Heart left ventricle (tissue), 16 donors: ENCODE measurements at regions of chr19 and their contacts with region 1.

Region 1: GRCh38 chr19:30649934-30650614 is 277.9 kb downstream of the ZNF536 start:
- DNase-seq: no peak
- ATAC-seq: peak in 2 of 4 donors; percentile 18 to 45
- H3K4me3 ChIP-seq: no peak overlapping the region
- H3K27ac ChIP-seq: no peak overlapping the region
- H3K4me1 ChIP-seq: peaks cover 0 to 3% (median 0%) of the 10 kb centered on the region in 12 donors
- H3K27me3 ChIP-seq: peaks cover 0 to 57% (median 12%) of the 10 kb centered on the region in 9 donors
- CTCF ChIP-seq: peak; percentile 54 to 86 (median 78)
- POLR2A ChIP-seq: no peak

Region 2: DNA sequence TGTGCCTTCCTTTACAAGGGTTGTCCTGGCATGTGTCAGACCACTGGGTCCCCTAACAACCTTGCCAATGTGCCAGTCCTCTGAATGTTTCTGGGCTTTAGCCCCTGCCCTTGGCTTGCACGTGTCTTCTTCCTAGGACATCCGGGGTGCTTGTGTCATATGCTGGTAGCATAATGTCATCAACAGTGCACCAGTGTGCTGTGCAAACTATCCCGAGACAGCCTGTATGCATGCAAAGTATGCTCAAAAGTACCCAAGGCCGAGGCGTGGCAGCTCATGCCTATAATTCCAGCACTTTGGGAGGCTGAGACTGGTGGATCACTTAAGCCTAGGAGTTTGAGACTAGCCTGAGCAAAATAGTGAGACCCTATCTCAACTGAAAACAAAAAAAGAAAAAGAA is 914.3 kb before region 1 on chr19:
- intact Hi-C with region 1: loop called in 5 of 10 experiments (anchors 5 to 10 kb)
- DNase-seq: no peak
- ATAC-seq: no peak
- H3K4me3 ChIP-seq: no peak overlapping the region
- H3K27ac ChIP-seq: no peak overlapping the region
- H3K4me1 ChIP-seq: peaks cover 0 to under 1% (median 0%) of the 10 kb centered on the region in 12 donors
- H3K27me3 ChIP-seq: peaks cover 0 to 36% (median 0%) of the 10 kb centered on the region in 9 donors
- CTCF ChIP-seq: no peak
- POLR2A ChIP-seq: no peak

Region 3: DNA sequence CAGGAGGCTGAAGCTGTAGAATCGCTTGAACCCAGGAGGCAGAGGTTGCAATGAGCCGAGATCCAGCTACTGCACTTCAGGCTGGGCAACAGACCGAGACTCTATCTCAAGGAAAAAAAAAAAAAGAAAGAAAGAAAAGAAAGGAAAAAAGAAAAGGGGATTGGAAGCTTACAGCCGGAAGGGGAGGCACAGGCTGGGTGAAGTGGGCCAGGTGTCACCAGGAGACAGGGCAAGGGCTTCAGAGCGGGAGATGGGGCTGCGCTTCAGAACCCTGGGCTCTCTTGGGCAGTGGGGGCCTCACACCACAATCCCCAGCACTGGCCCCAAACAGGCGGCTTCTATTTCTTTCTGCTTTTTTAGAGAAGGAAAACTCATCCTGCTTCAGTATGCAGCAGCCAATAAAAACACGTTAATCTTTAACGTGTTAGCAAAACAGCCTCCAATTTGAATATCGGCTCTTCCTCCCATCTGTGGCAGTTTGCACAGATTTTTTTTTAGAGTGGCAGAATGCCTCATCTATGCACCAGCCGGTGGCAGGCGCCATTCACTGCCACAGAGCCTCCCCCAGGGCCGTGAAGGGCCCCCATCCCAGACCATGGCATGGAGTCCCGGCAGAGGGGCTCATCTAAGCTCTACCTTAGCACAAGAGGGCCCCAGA is 888.4 kb before region 1 on chr19:
- intact Hi-C with region 1: loop called in 3 of 10 experiments (anchors 10 kb)
- DNase-seq: no peak
- ATAC-seq: no peak
- H3K4me3 ChIP-seq: no peak overlapping the region
- H3K27ac ChIP-seq: no peak overlapping the region
- H3K4me1 ChIP-seq: peaks cover 0 to 7% (median 0%) of the 10 kb centered on the region in 12 donors
- H3K27me3 ChIP-seq: peaks cover 0 to 20% (median 0%) of the 10 kb centered on the region in 9 donors
- CTCF ChIP-seq: no peak
- POLR2A ChIP-seq: no peak

Region 4: GRCh38 chr19:29873024-29873800 is 776.9 kb before region 1 on chr19:
- intact Hi-C with region 1: loop called in 1 of 10 experiments (anchors 10 kb)
- DNase-seq: peak in 3 of 5 donors; percentile 49 to 80 (median 59)
- ATAC-seq: peak in 3 of 4 donors; percentile 54 to 84 (median 79)
- H3K4me3 ChIP-seq: peak overlapping the region; percentile 21 to 59 (median 51)
- H3K27ac ChIP-seq: no peak overlapping the region
- H3K4me1 ChIP-seq: peaks cover 0 to 29% (median 12%) of the 10 kb centered on the region in 12 donors
- H3K27me3 ChIP-seq: peaks cover 0 to 34% (median 19%) of the 10 kb centered on the region in 9 donors
- CTCF ChIP-seq: peak; percentile 68 to 95 (median 88)
- POLR2A ChIP-seq: no peak

Region 5: GRCh38 chr19:30227661-30228428 is 422.2 kb before region 1 on chr19:
- intact Hi-C with region 1: loop called (anchors 2 to 10 kb)
- DNase-seq: peak; percentile 56 to 85 (median 68)
- ATAC-seq: peak; percentile 64 to 86 (median 78)
- H3K4me3 ChIP-seq: peak overlapping the region; percentile 41 to 69 (median 56)
- H3K27ac ChIP-seq: peak overlapping the region in 7 of 12 donors; percentile 15 to 82 (median 39)
- H3K4me1 ChIP-seq: peaks cover 0 to 51% (median 15%) of the 10 kb centered on the region in 12 donors
- H3K27me3 ChIP-seq: peaks cover 4 to 81% (median 49%) of the 10 kb centered on the region in 9 donors
- CTCF ChIP-seq: peak; percentile 27 to 77 (median 64)
- POLR2A ChIP-seq: no peak

Region 6: GRCh38 chr19:30335306-30335886 is 314.7 kb before region 1 on chr19:
- intact Hi-C with region 1: no loop called
- DNase-seq: no peak
- ATAC-seq: no peak
- H3K4me3 ChIP-seq: no peak overlapping the region
- H3K27ac ChIP-seq: no peak overlapping the region
- H3K4me1 ChIP-seq: no peaks in the 10 kb centered on the region
- H3K27me3 ChIP-seq: no peaks in the 10 kb centered on the region
- CTCF ChIP-seq: no peak
- POLR2A ChIP-seq: no peak